ENCODE measurements at regions of chr20 and their contacts with region 1.

Region 1: GRCh38 chr20:57391074-57391554 is at the start of gene RBM38:
- DNase-seq: peak; percentile 74
- H3K4me3 Mint-ChIP-seq: peak within 1 kb of the TSS; percentile 91
- H3K27ac Mint-ChIP-seq: peak within 1 kb of the TSS; percentile 98
- H3K4me1 Mint-ChIP-seq: peaks cover 30% of the 10 kb centered on the region
- H3K27me3 Mint-ChIP-seq: no peaks in the 10 kb centered on the region
- total RNA-seq, gene RBM38: 88.9 and 89.5 TPM in 2 replicates

Region 2: DNA sequence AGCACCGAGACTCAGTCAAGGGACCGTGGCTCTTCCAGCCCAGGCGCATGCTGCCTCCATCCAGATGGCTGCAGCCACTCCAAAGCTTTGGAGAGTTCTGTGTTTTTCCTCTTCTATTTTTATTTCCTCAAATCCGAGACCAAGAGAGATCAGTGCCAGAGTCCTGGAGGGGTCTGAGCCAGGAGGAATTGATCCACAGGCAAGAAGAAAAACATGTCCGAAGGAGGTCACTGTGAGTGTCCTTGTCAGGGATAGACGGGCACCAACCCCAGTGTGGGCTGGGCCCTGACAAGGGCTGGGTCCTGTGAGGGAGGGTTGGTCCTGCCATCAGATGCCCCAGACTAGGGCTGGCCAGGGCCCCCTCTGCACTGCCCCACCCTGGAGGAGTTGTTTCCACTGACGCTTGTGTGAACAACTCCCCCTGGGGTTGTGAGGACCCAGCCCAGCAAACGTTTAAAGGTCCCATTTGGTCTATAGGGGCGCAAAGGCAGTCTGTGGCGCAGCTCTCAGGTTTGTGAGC is 228.9 kb before region 1 on chr20:
- intact Hi-C with region 1: no loop called
- DNase-seq: no peak
- H3K4me3 Mint-ChIP-seq: no peak overlapping the region
- H3K27ac Mint-ChIP-seq: no peak overlapping the region
- H3K4me1 Mint-ChIP-seq: no peaks in the 10 kb centered on the region
- H3K27me3 Mint-ChIP-seq: no peaks in the 10 kb centered on the region

Region 3: GRCh38 chr20:57619051-57619834 is 228.1 kb after region 1 on chr20:
- intact Hi-C with region 1: loop called (anchors 5 kb)
- DNase-seq: peak; percentile 77
- H3K4me3 Mint-ChIP-seq: peak overlapping the region; percentile 65
- H3K27ac Mint-ChIP-seq: peak overlapping the region; percentile 91
- H3K4me1 Mint-ChIP-seq: peaks cover 47% of the 10 kb centered on the region
- H3K27me3 Mint-ChIP-seq: peaks cover 17% of the 10 kb centered on the region

Region 4: DNA sequence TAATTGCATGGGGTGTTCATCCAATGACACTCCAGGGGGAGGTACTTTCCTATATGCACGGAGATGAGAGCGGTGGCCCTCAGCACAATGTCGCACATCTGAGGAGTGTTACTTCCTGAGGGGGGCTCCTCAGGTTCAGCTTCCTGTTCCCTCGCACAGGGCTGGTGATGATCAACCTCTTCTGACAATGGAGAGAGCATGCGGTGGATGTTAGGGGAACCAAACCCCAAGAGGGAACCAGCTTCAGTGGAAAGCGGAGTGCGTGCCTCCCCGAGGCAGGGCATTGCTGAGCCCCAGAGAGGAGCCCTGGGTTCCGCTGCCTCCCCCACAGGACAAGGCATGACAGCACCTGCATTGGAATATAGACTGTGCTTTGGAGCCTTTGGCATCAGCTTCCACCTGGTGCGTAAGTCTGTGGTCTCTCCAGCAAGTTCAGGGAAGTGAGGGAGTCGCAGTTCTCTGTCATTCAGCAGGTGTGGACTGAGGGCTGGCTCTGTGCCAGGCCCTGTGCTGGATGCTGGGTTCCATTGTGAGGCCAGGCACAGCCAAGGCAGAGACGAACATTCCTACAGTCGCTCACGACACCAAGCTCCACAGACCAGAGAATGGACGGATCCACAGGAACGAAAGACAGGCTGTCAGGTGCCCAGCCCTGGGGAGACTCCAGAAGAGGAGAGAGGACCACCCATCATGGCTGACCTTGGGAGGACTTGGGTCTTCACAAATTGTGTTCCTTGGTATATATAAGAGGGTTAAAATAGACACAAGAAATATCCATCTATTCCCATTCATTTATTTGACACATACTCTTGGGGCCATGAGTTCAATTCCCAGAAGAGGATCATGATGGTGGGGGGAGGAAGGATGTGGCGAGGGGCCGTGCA is 1768.6 kb after region 1 on chr20:
- intact Hi-C with region 1: loop called (anchors 10 kb)
- DNase-seq: no peak
- H3K4me3 Mint-ChIP-seq: peak overlapping the region; percentile 41
- H3K27ac Mint-ChIP-seq: peak overlapping the region; percentile 62
- H3K4me1 Mint-ChIP-seq: peaks cover 71% of the 10 kb centered on the region
- H3K27me3 Mint-ChIP-seq: no peaks in the 10 kb centered on the region

Measured in activated T-helper 2 cell treated with anti-CD3 and anti-CD28 coated beads, Interferon-gamma antibody, Interleukin-2, Interleukin-4, amounts not matched to agents 10 μg/mL and 5 μg/mL and 100 μg/mL, durations not matched to agents 14 hours and 24 hours and 36 hours (primary cell).